ENCODE measurements at regions of chr4 and their contacts with region 1.

Region 1: GRCh38 chr4:25144870-25145481 is 15.3 kb downstream of the SEPSECS start:
- DNase-seq: peak; percentile 34
- CTCF ChIP-seq: peak; percentile 18

Region 2: DNA sequence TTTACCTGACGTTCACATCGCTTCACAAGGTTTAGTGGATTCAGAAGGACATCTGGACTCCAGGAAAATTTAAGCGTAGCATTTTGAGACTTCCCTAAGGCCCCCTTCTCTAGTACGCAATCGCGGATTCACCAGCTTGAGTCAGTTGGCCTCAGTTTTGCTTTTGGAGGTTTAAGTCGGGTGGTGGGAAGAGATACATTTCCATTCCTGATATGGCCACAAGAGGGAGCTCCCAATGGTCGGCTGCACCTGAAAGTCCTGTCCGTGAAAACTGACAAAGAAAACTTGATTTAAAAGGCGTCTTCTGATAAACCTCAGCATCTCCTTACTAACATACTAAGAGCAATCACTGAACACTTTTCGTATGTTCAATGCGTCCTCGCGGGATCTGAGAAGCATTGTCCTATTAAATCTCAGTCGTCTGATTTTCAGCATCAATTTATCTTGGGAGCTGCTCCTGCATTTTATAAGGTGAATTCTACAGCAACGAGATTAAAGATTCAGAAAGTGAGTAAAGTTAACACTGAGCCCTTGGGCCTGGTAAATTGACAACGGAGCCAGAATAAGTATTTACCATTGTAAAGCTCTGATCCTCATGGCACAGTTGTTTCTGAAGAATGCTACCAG is 164.8 kb before region 1 on chr4:
- in situ Hi-C with region 1: loop called (anchors 10 kb)
- DNase-seq: peak; percentile 59
- CTCF ChIP-seq: peak; percentile 79

Measured in GM13976 (cell line).